Activated CD4-positive, alpha-beta T cell treated with anti-CD3 and anti-CD28 coated beads for 36 hours (primary cell): ENCODE measurements at regions of chr16 and their contacts with region 1.

Region 1: GRCh38 chr16:74862741-74863244 is 88.2 kb upstream of the FA2H start:
- DNase-seq: peak; percentile 37
- ATAC-seq: peak; percentile 82
- H3K4me3 Mint-ChIP-seq: no peak overlapping the region
- H3K27ac Mint-ChIP-seq: no peak overlapping the region
- H3K4me1 Mint-ChIP-seq: peaks cover 6% of the 10 kb centered on the region
- H3K27me3 Mint-ChIP-seq: no peaks in the 10 kb centered on the region

Region 2: GRCh38 chr16:74709441-74709877 is 153.3 kb before region 1 on chr16:
- CTCF ChIA-PET with region 1: interaction called, 17 read pairs
- POLR2A ChIA-PET with region 1: no interaction called
- intact Hi-C with region 1: loop called (anchors 1 kb)
- DNase-seq: peak; percentile 90
- ATAC-seq: peak; percentile 99
- H3K4me3 Mint-ChIP-seq: no peak overlapping the region
- H3K27ac Mint-ChIP-seq: no peak overlapping the region
- H3K4me1 Mint-ChIP-seq: peaks cover 6% of the 10 kb centered on the region
- H3K27me3 Mint-ChIP-seq: no peaks in the 10 kb centered on the region

Region 3: GRCh38 chr16:74813109-74813641 is 49.6 kb before region 1 on chr16:
- CTCF ChIA-PET with region 1: interaction called, 56 read pairs
- POLR2A ChIA-PET with region 1: no interaction called
- intact Hi-C with region 1: loop called (anchors 1 kb)
- DNase-seq: peak; percentile 89
- ATAC-seq: peak; percentile 100
- H3K4me3 Mint-ChIP-seq: no peak overlapping the region
- H3K27ac Mint-ChIP-seq: no peak overlapping the region
- H3K4me1 Mint-ChIP-seq: no peaks in the 10 kb centered on the region
- H3K27me3 Mint-ChIP-seq: no peaks in the 10 kb centered on the region

Region 4: DNA sequence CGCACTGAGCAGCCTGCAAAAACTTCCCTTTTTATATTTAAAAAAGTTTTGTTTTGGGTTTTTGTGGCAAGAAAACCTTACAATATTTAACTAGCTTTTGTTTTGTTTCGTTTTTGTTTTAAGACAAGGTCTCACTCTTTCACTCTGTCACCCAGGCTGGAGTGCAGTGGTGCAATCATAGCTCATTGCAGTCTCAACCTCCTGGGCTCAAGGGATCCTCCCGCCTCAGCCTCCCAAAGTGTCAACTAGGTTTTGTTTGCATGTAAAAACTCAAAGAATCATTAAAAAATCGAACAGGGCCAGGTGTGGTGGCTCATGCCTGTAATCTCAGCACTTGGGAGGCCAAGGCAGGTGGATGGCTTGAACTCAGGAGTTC is 10.3 kb before region 1 on chr16:
- CTCF ChIA-PET with region 1: interaction called, 11 read pairs
- POLR2A ChIA-PET with region 1: no interaction called
- intact Hi-C with region 1: no loop called
- DNase-seq: no peak
- ATAC-seq: no peak
- H3K4me3 Mint-ChIP-seq: no peak overlapping the region
- H3K27ac Mint-ChIP-seq: no peak overlapping the region
- H3K4me1 Mint-ChIP-seq: no peaks in the 10 kb centered on the region
- H3K27me3 Mint-ChIP-seq: no peaks in the 10 kb centered on the region

Region 5: GRCh38 chr16:74874123-74874522 is 11.3 kb after region 1 on chr16:
- CTCF ChIA-PET with region 1: interaction called, 10 read pairs
- POLR2A ChIA-PET with region 1: no interaction called
- intact Hi-C with region 1: no loop called
- DNase-seq: no peak
- ATAC-seq: no peak
- H3K4me3 Mint-ChIP-seq: no peak overlapping the region
- H3K27ac Mint-ChIP-seq: peak overlapping the region; percentile 55
- H3K4me1 Mint-ChIP-seq: peaks cover 12% of the 10 kb centered on the region
- H3K27me3 Mint-ChIP-seq: no peaks in the 10 kb centered on the region

Region 6: DNA sequence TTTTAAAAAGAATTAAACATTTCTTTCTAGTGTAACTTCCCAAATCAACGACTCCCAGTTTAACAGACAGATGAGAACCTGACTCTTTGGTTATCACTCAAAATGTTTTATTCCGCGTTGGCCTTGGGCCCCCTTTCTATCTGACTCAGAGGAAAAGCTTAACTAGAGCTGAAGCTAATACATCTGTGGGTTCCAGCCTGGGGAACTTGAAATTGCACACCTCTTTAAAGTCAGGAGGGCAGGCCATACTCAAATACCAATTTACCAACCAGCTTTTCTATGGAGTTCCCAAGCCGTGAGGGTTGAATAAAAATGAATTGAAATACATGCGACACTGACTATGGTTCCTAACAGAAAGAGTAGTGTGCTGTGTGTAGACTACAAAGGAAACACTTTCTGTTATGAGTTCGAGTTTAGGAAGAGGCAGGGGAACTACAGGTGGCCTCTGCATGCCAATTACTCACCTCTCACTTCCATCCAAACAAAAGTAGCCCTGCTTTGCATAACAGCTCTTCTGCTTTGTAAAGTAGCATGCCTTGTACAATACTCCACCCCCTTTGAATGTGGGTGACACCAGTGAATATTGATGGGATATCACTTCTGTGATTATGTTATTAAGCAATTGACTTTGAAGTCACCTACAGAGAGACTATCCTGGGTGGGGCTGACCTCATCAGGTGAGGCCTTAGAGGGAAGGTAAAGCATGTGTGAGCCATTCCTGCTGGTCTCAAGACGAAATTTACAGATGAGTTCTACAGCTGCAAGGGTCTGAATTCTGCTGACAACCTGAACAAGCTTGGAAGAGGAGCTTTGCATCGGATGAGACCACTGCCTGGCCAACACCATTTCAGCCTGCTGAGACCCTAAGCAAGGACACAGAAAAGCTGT is 30.0 kb after region 1 on chr16:
- CTCF ChIA-PET with region 1: interaction called, 13 read pairs
- POLR2A ChIA-PET with region 1: no interaction called
- intact Hi-C with region 1: no loop called
- DNase-seq: no peak
- ATAC-seq: no peak
- H3K4me3 Mint-ChIP-seq: no peak overlapping the region
- H3K27ac Mint-ChIP-seq: no peak overlapping the region
- H3K4me1 Mint-ChIP-seq: peaks cover 3% of the 10 kb centered on the region
- H3K27me3 Mint-ChIP-seq: no peaks in the 10 kb centered on the region